Gastrocnemius medialis (tissue), 4 donors: ENCODE measurements at regions of chr1 and their contacts with region 1.

Region 1: DNA sequence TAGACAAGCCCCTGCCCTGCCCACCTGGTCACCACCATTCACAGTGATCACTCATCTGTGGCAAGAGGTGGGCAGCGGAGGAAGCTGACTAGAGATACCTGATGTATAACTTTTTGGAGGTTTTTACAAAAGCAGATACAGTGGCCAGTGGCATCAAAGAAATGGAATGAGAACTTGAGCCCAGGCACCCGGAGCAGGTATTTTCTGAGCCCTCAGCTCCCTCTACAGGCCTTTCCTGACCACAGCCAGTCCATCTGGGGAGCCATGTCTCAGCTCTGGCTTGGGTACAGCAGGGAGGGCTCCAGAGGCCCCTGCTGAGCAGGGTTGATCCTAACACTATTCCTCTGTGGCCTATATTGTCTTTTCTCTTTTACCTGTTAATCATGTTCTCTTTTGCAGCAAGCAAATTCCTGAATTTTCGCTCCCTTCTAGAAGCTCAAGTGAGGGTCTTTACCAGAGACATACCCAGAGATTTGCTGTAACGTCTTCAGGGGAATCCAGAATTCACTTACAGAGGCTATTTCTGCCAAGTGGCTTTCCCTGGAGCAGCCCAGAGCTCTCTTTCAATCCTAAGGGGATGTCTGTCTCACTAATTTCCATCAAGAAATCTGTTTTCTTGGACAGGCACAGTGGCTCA is 27.3 kb downstream of the GPR157 start:
- DNase-seq: peak; percentile 35 to 61
- ATAC-seq: peak; percentile 78 to 83
- H3K4me3 ChIP-seq: no peak overlapping the region
- H3K27ac ChIP-seq: no peak overlapping the region
- H3K4me1 ChIP-seq: peaks cover 15 to 16% of the 10 kb centered on the region in 2 donors
- H3K27me3 ChIP-seq: no peaks in the 10 kb centered on the region
- CTCF ChIP-seq: peak; percentile 55 to 71 (median 64)
- POLR2A ChIP-seq: no peak

Region 2: DNA sequence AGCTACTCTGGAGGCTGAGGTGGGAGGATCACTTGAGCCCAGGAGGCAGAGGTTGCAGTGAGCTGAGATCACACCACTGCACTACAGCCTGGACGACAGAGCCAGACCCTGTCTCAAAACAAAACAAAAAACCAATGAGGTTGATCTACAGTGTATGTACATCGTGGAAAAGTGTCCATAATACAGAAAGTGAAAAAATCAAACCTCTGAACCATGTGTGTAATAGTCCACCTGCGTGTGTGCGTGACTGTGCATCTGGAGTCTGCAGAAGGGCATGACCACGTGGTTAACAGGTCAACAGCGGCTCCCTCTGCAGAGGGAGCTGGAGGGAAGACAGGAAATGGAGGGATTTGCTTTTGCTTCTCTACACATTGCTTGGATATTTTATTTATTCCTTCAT is 190.7 kb before region 1 on chr1:
- in situ Hi-C with region 1: no loop called
- intact Hi-C with region 1: loop called (anchors 10 kb)
- DNase-seq: no peak
- ATAC-seq: no peak
- H3K4me3 ChIP-seq: no peak overlapping the region
- H3K27ac ChIP-seq: no peak overlapping the region
- H3K4me1 ChIP-seq: no peaks in the 10 kb centered on the region
- H3K27me3 ChIP-seq: no peaks in the 10 kb centered on the region
- CTCF ChIP-seq: no peak
- POLR2A ChIP-seq: no peak

Region 3: DNA sequence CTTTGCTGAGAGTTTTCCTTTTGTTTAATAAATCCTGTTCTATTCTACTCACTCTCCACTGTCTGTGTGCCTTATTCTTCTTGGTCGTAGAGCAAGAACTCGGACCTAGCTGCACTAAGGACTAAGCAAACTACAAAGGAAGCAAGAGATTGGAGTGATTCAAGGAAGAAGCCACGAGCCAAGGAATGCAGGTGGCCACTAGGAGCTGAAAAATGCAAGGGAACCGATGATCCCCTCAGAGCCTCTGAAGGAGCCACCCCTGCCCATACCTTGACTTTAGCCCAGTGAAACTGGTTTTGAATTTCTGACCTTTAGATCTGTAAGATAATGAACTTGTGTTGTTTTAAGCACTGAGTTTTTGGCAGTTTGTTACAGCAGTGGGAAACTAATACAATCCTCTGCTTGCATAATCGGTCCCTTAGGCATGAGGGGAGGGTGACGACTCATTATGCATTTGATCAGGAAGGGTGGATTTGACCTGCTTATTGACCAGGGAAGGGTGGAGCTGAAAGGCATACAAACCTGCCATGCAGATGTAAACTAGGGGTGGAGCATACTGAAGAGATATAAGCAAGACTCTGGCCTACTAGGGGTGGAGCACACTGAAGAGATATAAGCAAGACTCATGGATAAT is 162.1 kb before region 1 on chr1:
- in situ Hi-C with region 1: loop called in 1 of 4 experiments (anchors 10 kb)
- intact Hi-C with region 1: no loop called
- DNase-seq: no peak
- ATAC-seq: no peak
- H3K4me3 ChIP-seq: no peak overlapping the region
- H3K27ac ChIP-seq: no peak overlapping the region
- H3K4me1 ChIP-seq: no peaks in the 10 kb centered on the region
- H3K27me3 ChIP-seq: no peaks in the 10 kb centered on the region
- CTCF ChIP-seq: no peak
- POLR2A ChIP-seq: no peak

Region 4: DNA sequence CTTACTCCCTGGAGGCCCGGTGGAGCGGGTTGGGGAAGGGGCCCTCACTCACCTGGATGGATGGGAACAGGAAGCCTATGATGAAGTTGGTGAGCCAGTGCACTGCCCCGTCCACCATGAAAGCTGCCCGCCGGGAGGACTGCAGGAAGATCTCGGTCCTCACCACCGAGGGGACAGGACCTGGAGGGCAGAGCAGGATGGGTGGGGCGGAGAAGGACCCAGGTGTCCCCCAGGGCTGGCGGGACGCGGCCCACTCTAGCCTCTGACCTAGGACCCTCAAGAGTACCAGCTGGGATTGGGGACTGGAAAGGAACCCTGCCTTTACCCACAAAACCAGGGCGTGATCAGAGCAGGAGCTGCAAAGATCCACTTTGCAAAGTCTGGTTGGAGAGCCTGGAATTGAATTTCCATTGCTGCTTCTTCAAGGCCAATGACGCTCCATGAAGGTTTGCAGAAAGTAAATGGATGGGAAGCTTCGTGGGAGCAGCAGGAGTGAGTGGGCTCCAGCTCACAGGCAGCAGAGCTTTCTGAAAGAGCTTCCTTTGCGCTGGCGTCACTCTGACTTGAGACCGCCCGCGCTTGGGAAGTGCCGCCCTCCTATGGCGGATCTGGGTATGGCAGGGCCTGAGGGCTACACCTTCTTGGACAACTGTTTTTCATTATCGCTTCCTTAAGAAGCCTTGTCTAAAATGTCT is 96.8 kb before region 1 on chr1:
- in situ Hi-C with region 1: loop called in 2 of 4 experiments (anchors 10 kb)
- intact Hi-C with region 1: loop called (anchors 5 kb)
- DNase-seq: peak; percentile 33 to 59
- ATAC-seq: peak; percentile 78 to 79
- H3K4me3 ChIP-seq: no peak overlapping the region
- H3K27ac ChIP-seq: no peak overlapping the region
- H3K4me1 ChIP-seq: no peaks in the 10 kb centered on the region
- H3K27me3 ChIP-seq: no peaks in the 10 kb centered on the region
- CTCF ChIP-seq: peak; percentile 71 to 90 (median 80)
- POLR2A ChIP-seq: no peak

Region 5: GRCh38 chr1:9150582-9151327 is 49.1 kb after region 1 on chr1:
- in situ Hi-C with region 1: no loop called
- intact Hi-C with region 1: loop called (anchors 5 kb)
- DNase-seq: peak in 1 of 2 donors; percentile 34
- ATAC-seq: peak; percentile 45 to 62
- H3K4me3 ChIP-seq: peak overlapping the region in 1 of 4 donors; percentile 20
- H3K27ac ChIP-seq: peak overlapping the region; percentile 65 to 75 (median 71)
- H3K4me1 ChIP-seq: peaks cover 11% of the 10 kb centered on the region in 2 donors
- H3K27me3 ChIP-seq: no peaks in the 10 kb centered on the region
- CTCF ChIP-seq: no peak
- POLR2A ChIP-seq: no peak